ENCODE measurements at regions of chr17 and their contacts with region 1.

Region 1: DNA sequence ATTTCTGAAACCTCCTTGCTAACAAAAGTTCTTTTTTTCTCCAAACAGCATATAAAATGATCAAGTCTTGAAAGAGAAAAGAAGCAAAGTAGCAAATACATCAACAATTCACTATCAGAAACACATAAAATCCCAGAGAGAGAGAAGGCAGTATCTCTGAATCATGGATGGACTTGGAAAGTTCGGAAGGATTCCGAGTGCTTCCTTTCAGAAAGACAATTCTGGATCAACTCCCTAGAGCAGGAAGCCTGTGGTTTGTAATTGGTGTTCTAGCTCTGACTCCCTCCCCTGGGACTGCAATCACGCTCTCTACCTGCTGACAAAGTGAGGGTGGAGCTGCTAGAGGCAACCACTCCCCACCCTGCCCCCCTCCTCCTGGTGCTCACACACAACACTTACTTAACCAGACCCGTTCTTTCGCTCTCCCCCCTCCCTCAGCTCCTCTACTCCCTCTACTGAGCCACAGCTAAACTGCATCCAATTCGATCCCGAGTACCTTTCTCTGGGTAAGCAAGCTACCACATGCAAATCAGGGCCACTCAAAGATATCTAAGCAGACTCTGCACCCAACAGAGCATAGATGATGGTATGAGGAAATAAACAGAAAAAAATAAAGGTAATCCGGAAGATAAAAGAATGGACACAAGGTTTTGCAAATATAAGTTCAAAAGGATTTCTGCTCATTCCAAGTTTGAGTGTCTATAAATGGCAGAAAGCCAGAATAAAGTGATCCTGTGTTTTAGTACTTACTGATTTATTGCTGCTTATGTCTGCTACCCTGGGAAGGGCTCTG is at the start of gene RNF43:
- DNase-seq: peak; percentile 60
- ATAC-seq: peak; percentile 100
- H3K4me3 Mint-ChIP-seq: peak within 1 kb of the TSS; percentile 25
- H3K27ac Mint-ChIP-seq: peak within 1 kb of the TSS; percentile 37
- H3K4me1 Mint-ChIP-seq: peaks cover 10% of the 10 kb centered on the region
- H3K27me3 Mint-ChIP-seq: no peaks in the 10 kb centered on the region
- total RNA-seq, gene RNF43: 0.72 TPM in 1 of 2 experiments, not detected in the other

Region 2: GRCh38 chr17:58329035-58329809 is 88.3 kb before region 1 on chr17:
- POLR2A ChIA-PET with region 1: interaction called, 10 read pairs
- DNase-seq: peak; percentile 80
- ATAC-seq: peak; percentile 11
- H3K4me3 Mint-ChIP-seq: peak overlapping the region; percentile 93
- H3K27ac Mint-ChIP-seq: peak overlapping the region; percentile 97
- H3K4me1 Mint-ChIP-seq: peaks cover 49% of the 10 kb centered on the region
- H3K27me3 Mint-ChIP-seq: no peaks in the 10 kb centered on the region

Region 3: GRCh38 chr17:58337600-58338453 is 79.7 kb before region 1 on chr17:
- POLR2A ChIA-PET with region 1: interaction called, 13 read pairs
- DNase-seq: peak; percentile 92
- ATAC-seq: peak; percentile 62
- H3K4me3 Mint-ChIP-seq: peak overlapping the region; percentile 93
- H3K27ac Mint-ChIP-seq: peak overlapping the region; percentile 97
- H3K4me1 Mint-ChIP-seq: peaks cover 37% of the 10 kb centered on the region
- H3K27me3 Mint-ChIP-seq: no peaks in the 10 kb centered on the region

Region 4: GRCh38 chr17:58344047-58344790 is 73.3 kb before region 1 on chr17:
- POLR2A ChIA-PET with region 1: interaction called, 16 read pairs
- DNase-seq: peak; percentile 78
- ATAC-seq: peak; percentile 76
- H3K4me3 Mint-ChIP-seq: peak overlapping the region; percentile 93
- H3K27ac Mint-ChIP-seq: peak overlapping the region; percentile 97
- H3K4me1 Mint-ChIP-seq: peaks cover 71% of the 10 kb centered on the region
- H3K27me3 Mint-ChIP-seq: no peaks in the 10 kb centered on the region

Region 5: DNA sequence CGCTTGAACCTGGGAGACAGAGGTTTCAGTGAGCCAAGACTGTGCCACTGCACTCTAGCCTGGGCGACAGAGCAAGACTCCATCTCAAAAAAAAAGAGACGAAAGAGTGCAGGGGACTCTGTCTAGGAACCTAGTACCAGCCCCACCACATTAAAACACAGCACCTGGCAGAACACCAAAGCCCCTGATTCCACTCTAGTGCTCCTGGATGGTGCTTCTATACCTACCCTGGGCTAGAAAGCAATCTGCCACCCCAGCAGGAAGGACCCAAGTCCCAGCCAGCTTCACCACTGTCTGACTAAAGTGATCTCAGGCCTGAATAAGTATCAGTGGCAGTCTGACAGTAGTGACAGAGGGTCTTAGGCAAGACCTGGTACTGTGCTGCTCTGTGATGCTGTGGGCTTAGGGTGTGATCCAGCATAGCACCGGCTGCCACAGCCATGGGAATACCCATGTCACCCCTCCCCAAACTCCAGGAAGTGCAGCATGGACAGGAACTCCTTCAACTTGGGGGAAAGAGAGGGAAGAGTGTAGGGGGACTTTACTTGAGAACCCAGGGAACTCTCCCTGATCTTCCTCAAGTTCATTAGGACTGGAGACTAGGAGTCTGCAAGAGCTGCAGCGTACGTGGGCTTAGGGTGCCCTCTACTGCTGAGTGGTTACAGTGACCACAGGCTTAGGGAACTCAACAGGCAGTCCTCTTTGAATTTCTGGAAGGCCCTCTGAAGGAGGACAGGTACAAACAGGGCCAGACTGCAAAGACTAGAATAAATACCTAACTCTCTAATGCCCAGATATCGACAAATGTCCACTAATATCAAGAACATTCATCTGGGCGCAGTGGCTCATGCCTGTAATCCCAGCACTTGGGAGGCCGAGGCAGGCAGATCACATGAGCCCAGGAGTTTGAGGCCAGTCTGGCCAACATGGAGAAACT is 29.8 kb after region 1 on chr17:
- POLR2A ChIA-PET with region 1: no interaction called
- DNase-seq: peak; percentile 70
- ATAC-seq: peak; percentile 92
- H3K4me3 Mint-ChIP-seq: no peak overlapping the region
- H3K27ac Mint-ChIP-seq: no peak overlapping the region
- H3K4me1 Mint-ChIP-seq: peaks cover 8% of the 10 kb centered on the region
- H3K27me3 Mint-ChIP-seq: peaks cover 5% of the 10 kb centered on the region

Region 6: GRCh38 chr17:58468944-58469343 is 51.4 kb after region 1 on chr17:
- POLR2A ChIA-PET with region 1: no interaction called
- DNase-seq: no peak
- ATAC-seq: no peak
- H3K4me3 Mint-ChIP-seq: no peak overlapping the region
- H3K27ac Mint-ChIP-seq: no peak overlapping the region
- H3K4me1 Mint-ChIP-seq: no peaks in the 10 kb centered on the region
- H3K27me3 Mint-ChIP-seq: peaks cover 4% of the 10 kb centered on the region

Measured in activated naive CD8-positive, alpha-beta T cell treated with anti-CD3 and anti-CD28 coated beads, Interleukin-2, amount 10 ng/mL, durations not matched to agents 7 days and 5 days (primary cell).